GM12878 (cell line): ENCODE measurements at regions of chr4 and their contacts with region 1.

Region 1: GRCh38 chr4:26076000-26076587 is 162.1 kb downstream of the SMIM20 start:
- DNase-seq: peak; percentile 84
- ATAC-seq: peak; percentile 75
- H3K4me3 ChIP-seq: no peak overlapping the region
- H3K27ac ChIP-seq: peak overlapping the region; percentile 57
- H3K4me1 ChIP-seq: peaks cover 35% of the 10 kb centered on the region
- H3K27me3 ChIP-seq: no peaks in the 10 kb centered on the region
- CTCF ChIP-seq: no peak
- EP300 ChIP-seq: peak; percentile 70 to 90
- POLR2A ChIP-seq: no peak
- RAD21 ChIP-seq: no peak

Region 2: GRCh38 chr4:26061248-26061986 is 14.7 kb before region 1 on chr4:
- CTCF ChIA-PET with region 1: interaction called, 18 read pairs
- POLR2A ChIA-PET with region 1: no interaction called
- RAD21 ChIA-PET with region 1: interaction called, 5 read pairs
- SMC1A ChIA-PET with region 1: interaction called, 9 read pairs
- in situ Hi-C with region 1: no loop called
- intact Hi-C with region 1: no loop called
- DNase-seq: no peak
- ATAC-seq: peak; percentile 96
- H3K4me3 ChIP-seq: no peak overlapping the region
- H3K27ac ChIP-seq: no peak overlapping the region
- H3K4me1 ChIP-seq: peaks cover 9% of the 10 kb centered on the region; the same call in 1 of the 2 replicates
- H3K27me3 ChIP-seq: no peaks in the 10 kb centered on the region; a peak in 3 of 4 replicates
- CTCF ChIP-seq: peak; percentile 64 to 76 (median 76); a peak in 5 of 6 replicates
- EP300 ChIP-seq: no peak
- POLR2A ChIP-seq: no peak
- RAD21 ChIP-seq: peak; percentile 94

Region 3: DNA sequence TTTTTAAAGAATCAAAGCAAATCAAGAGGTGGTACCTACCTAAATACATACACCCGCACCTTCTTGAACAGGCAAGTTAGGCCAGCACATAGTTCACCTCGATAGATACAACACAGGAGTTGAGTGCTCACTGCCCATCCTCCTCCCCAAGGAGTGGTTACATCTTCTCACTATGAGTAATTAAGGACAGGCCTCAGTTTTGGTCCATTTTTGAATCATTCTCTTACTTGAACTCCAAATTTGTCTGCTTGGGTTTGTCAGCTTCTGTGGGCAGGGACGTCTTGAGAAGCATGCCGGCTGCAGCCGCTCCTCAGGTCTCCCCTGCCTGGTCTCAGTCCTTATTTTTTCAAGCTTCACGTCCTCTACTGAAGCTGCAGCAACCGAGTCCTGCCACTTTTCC is 54.1 kb after region 1 on chr4:
- CTCF ChIA-PET with region 1: interaction called, 14 read pairs
- POLR2A ChIA-PET with region 1: no interaction called
- RAD21 ChIA-PET with region 1: interaction called, 7 read pairs
- SMC1A ChIA-PET with region 1: interaction called, 12 read pairs
- in situ Hi-C with region 1: no loop called
- intact Hi-C with region 1: loop called (anchors 5 kb)
- DNase-seq: peak; percentile 90
- ATAC-seq: peak; percentile 79
- H3K4me3 ChIP-seq: no peak overlapping the region
- H3K27ac ChIP-seq: peak overlapping the region; percentile 60
- H3K4me1 ChIP-seq: peaks cover 52% of the 10 kb centered on the region
- H3K27me3 ChIP-seq: no peaks in the 10 kb centered on the region
- CTCF ChIP-seq: no peak
- EP300 ChIP-seq: peak; percentile 78 to 79; a peak in 3 of 4 replicates
- POLR2A ChIP-seq: no peak
- RAD21 ChIP-seq: peak; percentile 30; the same call in 1 of the 2 replicates

Region 4: DNA sequence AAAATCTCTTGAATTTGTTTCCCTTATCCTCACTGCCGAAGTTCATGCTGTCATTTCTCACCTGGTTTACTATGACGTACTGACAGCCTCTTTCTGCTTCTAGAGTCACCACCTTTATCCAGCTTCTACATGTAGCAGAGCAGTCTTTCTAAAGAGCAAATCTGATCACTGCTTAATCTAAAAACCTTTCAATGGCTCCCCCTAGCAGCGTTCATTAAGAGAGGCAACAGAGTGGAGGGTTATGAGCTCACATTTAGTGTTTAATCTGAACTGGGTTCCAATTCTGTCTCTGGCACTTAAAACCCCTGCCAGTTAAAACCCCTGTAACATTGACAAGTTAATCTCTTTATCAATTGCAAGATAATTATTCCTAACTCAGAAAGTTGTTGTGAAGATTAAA is 249.1 kb after region 1 on chr4:
- CTCF ChIA-PET with region 1: interaction called, 29 read pairs
- POLR2A ChIA-PET with region 1: interaction called, 7 read pairs
- RAD21 ChIA-PET with region 1: interaction called, 37 read pairs
- SMC1A ChIA-PET with region 1: interaction called, 24 read pairs
- in situ Hi-C with region 1: loop called (anchors 5 kb)
- intact Hi-C with region 1: no loop called
- DNase-seq: no peak
- ATAC-seq: peak; percentile 63
- H3K4me3 ChIP-seq: peak overlapping the region; percentile 10; the same call in 1 of the 2 replicates
- H3K27ac ChIP-seq: no peak overlapping the region
- H3K4me1 ChIP-seq: no peaks in the 10 kb centered on the region
- H3K27me3 ChIP-seq: no peaks in the 10 kb centered on the region
- CTCF ChIP-seq: peak; percentile 46 to 64 (median 56); a peak in 5 of 6 replicates
- EP300 ChIP-seq: no peak
- POLR2A ChIP-seq: no peak
- RAD21 ChIP-seq: peak; percentile 78